K562 (cell line): ENCODE measurements at regions of chr2 and their contacts with region 1.

Region 1: GRCh38 chr2:48952143-48952542 is 196.6 kb upstream of the LHCGR start:
- DNase-seq: no peak
- ATAC-seq: no peak
- H3K4me3 ChIP-seq: no peak overlapping the region
- H3K27ac ChIP-seq: no peak overlapping the region
- H3K4me1 ChIP-seq: no peaks in the 10 kb centered on the region
- H3K27me3 ChIP-seq: no peaks in the 10 kb centered on the region
- CTCF ChIP-seq: no peak
- EP300 ChIP-seq: no peak
- POLR2A ChIP-seq: no peak
- RAD21 ChIP-seq: no peak

Region 2: DNA sequence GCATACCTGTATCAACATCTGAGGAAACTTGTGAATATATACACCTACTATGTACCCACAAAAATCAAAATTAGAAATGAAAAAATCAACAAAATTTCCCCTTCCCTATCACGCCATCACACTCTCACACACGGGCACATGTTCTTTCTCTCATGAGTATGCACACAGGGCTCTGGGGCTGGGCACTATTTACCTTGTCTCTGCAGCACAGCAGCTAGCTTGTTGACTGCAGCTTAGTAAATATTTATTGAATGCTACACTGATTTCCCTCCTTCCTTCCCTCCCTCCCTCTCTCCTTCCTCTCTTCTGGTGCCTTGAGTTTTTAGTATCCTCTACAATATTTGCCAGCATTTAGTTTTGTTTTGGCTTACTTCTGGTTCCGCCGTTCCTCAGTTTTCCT is 13.9 kb before region 1 on chr2:
- CTCF ChIA-PET with region 1: no interaction called
- POLR2A ChIA-PET with region 1: no interaction called
- in situ Hi-C with region 1: no loop called
- intact Hi-C with region 1: no loop called
- DNase-seq: no peak
- ATAC-seq: no peak
- H3K4me3 ChIP-seq: no peak overlapping the region
- H3K27ac ChIP-seq: no peak overlapping the region
- H3K4me1 ChIP-seq: no peaks in the 10 kb centered on the region
- H3K27me3 ChIP-seq: no peaks in the 10 kb centered on the region
- CTCF ChIP-seq: no peak
- EP300 ChIP-seq: no peak
- POLR2A ChIP-seq: no peak
- RAD21 ChIP-seq: no peak

Region 3: GRCh38 chr2:50492477-50492851 is 1540.3 kb after region 1 on chr2:
- CTCF ChIA-PET with region 1: no interaction called
- POLR2A ChIA-PET with region 1: no interaction called
- in situ Hi-C with region 1: loop called (anchors 25 kb)
- intact Hi-C with region 1: loop called (anchors 2 kb)
- DNase-seq: peak; percentile 52 to 62 (median 58)
- ATAC-seq: peak; percentile 92
- H3K4me3 ChIP-seq: no peak overlapping the region
- H3K27ac ChIP-seq: no peak overlapping the region
- H3K4me1 ChIP-seq: no peaks in the 10 kb centered on the region
- H3K27me3 ChIP-seq: no peaks in the 10 kb centered on the region
- CTCF ChIP-seq: peak; percentile 29 to 72 (median 60); a peak in 5 of 6 replicates
- EP300 ChIP-seq: no peak
- POLR2A ChIP-seq: no peak
- RAD21 ChIP-seq: peak; percentile 62 to 70